ENCODE measurements at regions of chr9 and their contacts with region 1.

Region 1: GRCh38 chr9:106092083-106092482 is 397.7 kb downstream of the TMEM38B start:
- DNase-seq: no peak
- H3K4me3 ChIP-seq: no peak overlapping the region
- H3K27ac ChIP-seq: no peak overlapping the region
- H3K4me1 ChIP-seq: no peaks in the 10 kb centered on the region
- H3K27me3 ChIP-seq: no peaks in the 10 kb centered on the region
- CTCF ChIP-seq: no peak
- POLR2A ChIP-seq: no peak

Region 2: GRCh38 chr9:107309271-107309670 is 1217.2 kb after region 1 on chr9:
- intact Hi-C with region 1: loop called (anchors 10 kb)
- DNase-seq: no peak
- H3K4me3 ChIP-seq: no peak overlapping the region
- H3K27ac ChIP-seq: no peak overlapping the region
- H3K4me1 ChIP-seq: no peaks in the 10 kb centered on the region
- H3K27me3 ChIP-seq: no peaks in the 10 kb centered on the region
- CTCF ChIP-seq: no peak
- POLR2A ChIP-seq: no peak

Measured in breast epithelium (tissue), 4 donors.